A673 (cell line): ENCODE measurements at regions of chr2 and their contacts with region 1.

Region 1: DNA sequence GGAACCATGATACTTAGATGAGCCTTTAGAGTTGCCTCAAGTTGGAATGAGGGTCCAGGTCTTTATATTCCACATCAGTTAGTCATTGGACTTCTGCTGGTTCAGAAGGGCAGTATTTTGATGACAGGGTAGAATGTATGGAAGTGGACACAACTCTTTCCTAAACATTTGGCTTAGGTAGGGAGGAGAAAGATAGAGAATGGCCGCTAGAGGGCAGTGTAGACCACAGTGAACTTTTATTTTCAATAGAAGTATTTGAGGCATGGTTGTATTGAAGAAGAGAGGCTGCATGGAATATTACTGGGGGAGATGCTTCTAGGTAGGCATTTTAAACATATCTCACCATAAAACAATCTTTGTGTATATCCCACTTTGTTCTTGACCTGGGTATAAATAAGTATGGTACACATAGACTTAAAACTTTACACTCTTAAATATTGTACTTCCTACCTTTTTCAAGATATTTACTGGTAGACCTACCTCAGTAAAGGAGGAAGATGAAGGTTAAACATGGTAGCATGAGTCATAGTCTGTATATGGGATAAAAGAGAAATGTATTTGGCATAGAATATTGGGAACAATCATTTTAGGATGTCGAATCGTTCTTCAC is 497.6 kb upstream of the FAM98A start:
- DNase-seq: peak; percentile 79
- H3K4me3 ChIP-seq: no peak overlapping the region
- H3K27ac ChIP-seq: no peak overlapping the region
- H3K4me1 ChIP-seq: no peaks in the 10 kb centered on the region
- H3K27me3 ChIP-seq: no peaks in the 10 kb centered on the region
- CTCF ChIP-seq: peak; percentile 81

Region 2: GRCh38 chr2:33681369-33681757 is 415.3 kb before region 1 on chr2:
- CTCF ChIA-PET with region 1: no interaction called
- POLR2A ChIA-PET with region 1: no interaction called
- intact Hi-C with region 1: loop called (anchors 5 kb)
- DNase-seq: peak; percentile 80
- H3K4me3 ChIP-seq: peak overlapping the region; percentile 13
- H3K27ac ChIP-seq: peak overlapping the region; percentile 73
- H3K4me1 ChIP-seq: peaks cover 12% of the 10 kb centered on the region
- H3K27me3 ChIP-seq: no peaks in the 10 kb centered on the region
- CTCF ChIP-seq: peak; percentile 73

Region 3: GRCh38 chr2:34012715-34013302 is 83.9 kb before region 1 on chr2:
- CTCF ChIA-PET with region 1: no interaction called
- POLR2A ChIA-PET with region 1: no interaction called
- intact Hi-C with region 1: loop called (anchors 5 kb)
- DNase-seq: peak; percentile 85
- H3K4me3 ChIP-seq: no peak overlapping the region
- H3K27ac ChIP-seq: no peak overlapping the region
- H3K4me1 ChIP-seq: peaks cover 4% of the 10 kb centered on the region
- H3K27me3 ChIP-seq: no peaks in the 10 kb centered on the region
- CTCF ChIP-seq: peak; percentile 91

Region 4: GRCh38 chr2:34570266-34570872 is 473.7 kb after region 1 on chr2:
- CTCF ChIA-PET with region 1: no interaction called
- POLR2A ChIA-PET with region 1: no interaction called
- intact Hi-C with region 1: loop called (anchors 5 kb)
- DNase-seq: peak; percentile 63
- H3K4me3 ChIP-seq: no peak overlapping the region
- H3K27ac ChIP-seq: no peak overlapping the region
- H3K4me1 ChIP-seq: no peaks in the 10 kb centered on the region
- H3K27me3 ChIP-seq: no peaks in the 10 kb centered on the region
- CTCF ChIP-seq: peak; percentile 63

Region 5: DNA sequence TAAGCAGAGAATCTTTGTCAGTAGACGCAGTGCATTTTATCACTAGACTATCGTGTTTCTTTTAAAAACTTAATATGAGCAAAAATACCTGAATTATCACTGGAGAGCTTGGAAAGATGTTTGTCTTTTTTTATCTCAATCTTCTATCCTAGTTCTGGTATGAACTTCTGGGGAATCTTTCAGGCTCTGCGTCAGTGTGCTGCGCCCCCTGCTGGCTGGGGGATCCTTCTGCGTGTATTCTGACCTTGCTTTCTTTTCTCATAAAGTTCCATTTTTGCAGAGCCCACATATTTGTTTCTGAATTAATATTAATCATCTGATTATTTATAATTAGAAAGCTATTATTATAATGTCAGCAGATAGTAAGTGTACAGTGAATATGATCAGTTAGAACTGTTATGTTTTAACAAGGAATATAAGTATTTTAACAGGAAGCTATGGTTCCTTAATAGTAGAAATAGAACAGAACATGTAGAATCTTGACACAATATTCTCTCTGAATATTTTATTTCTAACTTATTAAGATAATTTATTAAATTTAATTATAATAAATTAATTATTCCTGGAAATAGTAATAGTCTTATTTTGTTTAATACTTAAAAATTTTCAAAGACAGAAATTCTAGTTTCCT is 1313.9 kb after region 1 on chr2:
- CTCF ChIA-PET with region 1: no interaction called
- POLR2A ChIA-PET with region 1: no interaction called
- intact Hi-C with region 1: loop called (anchors 2 kb)
- DNase-seq: peak; percentile 72
- H3K4me3 ChIP-seq: no peak overlapping the region
- H3K27ac ChIP-seq: no peak overlapping the region
- H3K4me1 ChIP-seq: no peaks in the 10 kb centered on the region
- H3K27me3 ChIP-seq: no peaks in the 10 kb centered on the region
- CTCF ChIP-seq: peak; percentile 98